Naive thymus-derived CD4-positive, alpha-beta T cell (primary cell): ENCODE measurements at regions of chr2 and their contacts with region 1.

Region 1: DNA sequence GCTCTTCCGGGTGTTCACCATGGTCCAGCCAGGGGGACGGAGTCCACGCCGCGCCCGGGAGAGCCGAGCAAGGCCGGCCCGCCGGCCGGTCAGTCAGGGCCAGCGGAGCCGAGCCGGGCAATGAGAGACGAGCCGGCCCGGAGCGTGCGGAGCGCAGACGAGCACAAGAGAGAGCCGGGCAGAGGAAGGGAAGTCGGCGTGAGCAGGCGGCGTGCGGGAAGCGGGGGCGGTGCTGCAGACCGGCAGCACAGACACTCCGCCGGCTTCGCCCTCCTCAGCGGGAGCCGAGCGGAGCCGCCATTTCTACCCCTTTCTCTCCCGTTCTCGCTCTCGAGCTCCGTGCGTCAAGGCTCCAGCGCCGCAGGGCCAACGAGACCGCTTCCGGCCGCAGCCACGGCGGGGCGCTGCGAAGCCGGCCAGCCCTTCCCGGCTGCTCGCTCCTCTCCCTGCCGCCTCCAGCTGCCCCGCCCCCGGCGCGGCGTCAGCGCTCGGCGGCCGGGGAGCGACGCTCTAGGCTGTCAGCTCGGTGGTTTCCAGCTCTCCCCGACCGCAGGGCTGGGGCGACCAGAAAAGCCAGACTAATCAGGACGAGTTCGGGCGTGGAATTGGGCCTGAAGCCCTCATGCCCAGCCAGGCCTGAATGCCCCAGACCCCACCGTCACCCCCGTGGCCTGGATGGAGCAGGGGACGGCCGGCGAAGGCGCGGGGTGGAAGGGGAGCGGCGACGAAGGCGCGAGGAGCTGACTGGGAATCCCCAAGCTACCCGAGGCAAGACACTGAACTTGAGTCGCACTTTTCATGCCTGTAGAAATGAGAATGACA is at the start of gene ATAD2B:
- DNase-seq: peak; percentile 90 to 97 (median 95)
- ATAC-seq: peak; percentile 90
- H3K4me3 ChIP-seq: peak within 1 kb of the TSS; percentile 94
- H3K4me3 Mint-ChIP-seq: peak within 1 kb of the TSS; percentile 95 to 99 (median 98)
- H3K27ac ChIP-seq: peak within 1 kb of the TSS; percentile 97
- H3K27ac Mint-ChIP-seq: peak within 1 kb of the TSS; percentile 95 to 100 (median 99)
- H3K4me1 ChIP-seq: peaks cover 20 to 31% of the 10 kb centered on the region in 2 donors
- H3K4me1 Mint-ChIP-seq: peaks cover 34 to 57% (median 46%) of the 10 kb centered on the region in 7 donors
- H3K27me3 ChIP-seq: no peaks in the 10 kb centered on the region
- H3K27me3 Mint-ChIP-seq: peaks cover 0 to 4% (median 0%) of the 10 kb centered on the region in 5 donors
- total RNA-seq, gene ATAD2B: 31.8 to 55.8 (median 43.3) TPM

Region 2: DNA sequence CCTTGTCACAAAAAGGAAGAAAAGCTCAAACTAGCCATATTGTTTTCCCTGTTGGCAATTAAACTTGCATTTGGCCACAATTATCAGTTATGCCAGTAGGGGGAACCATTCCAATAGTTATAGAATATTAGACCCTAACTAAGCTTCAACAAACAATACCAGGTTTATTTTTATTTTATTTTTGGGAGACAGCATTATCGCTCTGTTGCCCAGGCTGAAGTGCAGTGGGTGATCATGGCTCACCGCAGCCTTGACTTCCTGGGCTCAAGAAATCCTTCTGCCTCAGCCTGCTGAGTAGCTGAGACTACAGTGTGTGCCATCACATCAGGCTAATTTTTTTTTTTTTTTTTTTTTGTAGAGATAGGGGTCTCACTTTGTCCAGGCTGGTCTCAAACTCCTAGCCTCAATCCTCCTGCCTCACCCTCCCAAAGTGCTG is 102.2 kb before region 1 on chr2:
- CTCF ChIA-PET with region 1: interaction called, 3 read pairs
- POLR2A ChIA-PET with region 1: interaction called, 11 read pairs
- intact Hi-C with region 1: loop called (anchors 1 to 2 kb)
- DNase-seq: peak in 7 of 9 donors; percentile 18 to 60 (median 50)
- ATAC-seq: peak; percentile 77
- H3K4me3 ChIP-seq: no peak overlapping the region
- H3K4me3 Mint-ChIP-seq: no peak overlapping the region
- H3K27ac ChIP-seq: no peak overlapping the region
- H3K27ac Mint-ChIP-seq: no peak overlapping the region
- H3K4me1 ChIP-seq: no peaks in the 10 kb centered on the region
- H3K4me1 Mint-ChIP-seq: peaks cover 0 to 4% (median 0%) of the 10 kb centered on the region in 7 donors
- H3K27me3 ChIP-seq: no peaks in the 10 kb centered on the region
- H3K27me3 Mint-ChIP-seq: no peaks in the 10 kb centered on the region

Region 3: GRCh38 chr2:23916727-23917405 is 10.1 kb before region 1 on chr2:
- CTCF ChIA-PET with region 1: no interaction called
- POLR2A ChIA-PET with region 1: interaction called, 4 read pairs
- intact Hi-C with region 1: loop called (anchors 1 kb)
- DNase-seq: peak in 6 of 9 donors; percentile 8 to 24 (median 17)
- ATAC-seq: peak; percentile 61
- H3K4me3 ChIP-seq: no peak overlapping the region
- H3K4me3 Mint-ChIP-seq: peak overlapping the region in 9 of 10 donors; percentile 8 to 69 (median 38)
- H3K27ac ChIP-seq: peak overlapping the region; percentile 20
- H3K27ac Mint-ChIP-seq: peak overlapping the region in 7 of 9 donors; percentile 0 to 61 (median 48)
- H3K4me1 ChIP-seq: peaks cover 12 to 16% of the 10 kb centered on the region in 2 donors
- H3K4me1 Mint-ChIP-seq: peaks cover 42 to 84% (median 68%) of the 10 kb centered on the region in 7 donors
- H3K27me3 ChIP-seq: no peaks in the 10 kb centered on the region
- H3K27me3 Mint-ChIP-seq: no peaks in the 10 kb centered on the region

Region 4: GRCh38 chr2:23988371-23988770 is 61.4 kb after region 1 on chr2:
- CTCF ChIA-PET with region 1: interaction called, 3 read pairs
- POLR2A ChIA-PET with region 1: interaction called, 4 read pairs
- intact Hi-C with region 1: loop called in 1 of 2 experiments (anchors 2 kb)
- DNase-seq: peak in 4 of 9 donors; percentile 8 to 26 (median 23)
- ATAC-seq: peak; percentile 60
- H3K4me3 ChIP-seq: no peak overlapping the region
- H3K4me3 Mint-ChIP-seq: no peak overlapping the region
- H3K27ac ChIP-seq: no peak overlapping the region
- H3K27ac Mint-ChIP-seq: peak overlapping the region in 1 of 9 donors; percentile 49
- H3K4me1 ChIP-seq: no peaks in the 10 kb centered on the region
- H3K4me1 Mint-ChIP-seq: peaks cover 0 to 3% (median 0%) of the 10 kb centered on the region in 7 donors
- H3K27me3 ChIP-seq: no peaks in the 10 kb centered on the region
- H3K27me3 Mint-ChIP-seq: no peaks in the 10 kb centered on the region

Region 5: DNA sequence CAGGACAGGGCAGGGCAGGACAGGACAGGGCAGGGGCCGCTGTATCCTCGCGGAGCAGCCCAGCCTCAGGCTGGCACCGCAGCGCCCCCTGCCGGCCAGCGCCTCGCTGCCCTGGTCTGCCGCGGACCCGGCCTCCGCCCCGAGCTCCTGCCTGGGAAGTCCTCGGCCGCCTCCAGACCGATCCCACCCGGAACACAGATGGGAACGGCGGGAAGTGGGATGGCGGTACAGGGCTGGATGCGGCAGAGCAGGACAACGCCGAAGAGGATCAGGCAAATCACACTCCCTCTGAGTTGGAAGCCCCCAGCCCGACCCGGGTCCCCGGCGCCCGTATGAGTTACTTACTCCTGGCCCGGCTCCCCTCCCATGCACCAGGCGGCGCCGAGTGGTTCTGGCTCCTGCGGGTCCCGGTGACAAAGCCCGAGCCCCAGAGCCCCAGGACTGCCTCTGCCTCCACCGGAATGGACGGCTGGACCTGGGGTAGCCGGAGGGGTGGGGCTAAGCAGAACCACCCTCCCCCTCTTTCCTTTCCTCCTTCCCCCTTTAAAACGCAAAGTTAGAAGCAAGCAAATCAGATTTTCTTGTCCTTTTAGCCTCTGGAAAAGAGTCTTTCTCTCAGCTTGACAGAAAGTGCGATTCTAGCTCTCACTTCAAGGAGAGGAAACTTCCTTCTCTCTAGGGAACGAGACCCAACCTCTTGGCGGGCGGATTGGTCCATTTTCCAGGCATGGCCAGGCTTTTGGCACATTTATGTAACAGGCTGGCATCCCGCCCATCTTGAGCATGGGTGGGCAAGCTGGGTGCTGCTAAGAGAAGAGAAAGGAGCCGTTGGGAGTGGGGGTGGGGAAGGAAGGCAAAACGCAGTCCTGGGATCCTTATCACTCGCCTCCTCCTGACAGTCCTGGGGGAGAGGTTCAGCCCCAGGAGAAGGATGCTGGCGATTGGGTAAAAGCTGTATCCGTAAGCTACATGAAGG is 157.7 kb after region 1 on chr2 and contains the start of gene TP53I3:
- CTCF ChIA-PET with region 1: interaction called, 7 read pairs
- POLR2A ChIA-PET with region 1: interaction called, 9 read pairs
- intact Hi-C with region 1: loop called (anchors 1 to 2 kb)
- DNase-seq: peak; percentile 59 to 93 (median 80)
- ATAC-seq: peak; percentile 96
- H3K4me3 ChIP-seq: peak within 1 kb of the TSS; percentile 61
- H3K4me3 Mint-ChIP-seq: peak within 1 kb of the TSS; percentile 81 to 93 (median 88)
- H3K27ac ChIP-seq: peak within 1 kb of the TSS; percentile 28
- H3K27ac Mint-ChIP-seq: peak within 1 kb of the TSS in 8 of 9 donors; percentile 49 to 83 (median 65)
- H3K4me1 ChIP-seq: peaks cover 5 to 8% of the 10 kb centered on the region in 2 donors
- H3K4me1 Mint-ChIP-seq: peaks cover 10 to 21% (median 17%) of the 10 kb centered on the region in 7 donors
- H3K27me3 ChIP-seq: no peaks in the 10 kb centered on the region
- H3K27me3 Mint-ChIP-seq: no peaks in the 10 kb centered on the region
- total RNA-seq, gene TP53I3: 0.49 to 5.0 (median 1.7) TPM

Region 6: DNA sequence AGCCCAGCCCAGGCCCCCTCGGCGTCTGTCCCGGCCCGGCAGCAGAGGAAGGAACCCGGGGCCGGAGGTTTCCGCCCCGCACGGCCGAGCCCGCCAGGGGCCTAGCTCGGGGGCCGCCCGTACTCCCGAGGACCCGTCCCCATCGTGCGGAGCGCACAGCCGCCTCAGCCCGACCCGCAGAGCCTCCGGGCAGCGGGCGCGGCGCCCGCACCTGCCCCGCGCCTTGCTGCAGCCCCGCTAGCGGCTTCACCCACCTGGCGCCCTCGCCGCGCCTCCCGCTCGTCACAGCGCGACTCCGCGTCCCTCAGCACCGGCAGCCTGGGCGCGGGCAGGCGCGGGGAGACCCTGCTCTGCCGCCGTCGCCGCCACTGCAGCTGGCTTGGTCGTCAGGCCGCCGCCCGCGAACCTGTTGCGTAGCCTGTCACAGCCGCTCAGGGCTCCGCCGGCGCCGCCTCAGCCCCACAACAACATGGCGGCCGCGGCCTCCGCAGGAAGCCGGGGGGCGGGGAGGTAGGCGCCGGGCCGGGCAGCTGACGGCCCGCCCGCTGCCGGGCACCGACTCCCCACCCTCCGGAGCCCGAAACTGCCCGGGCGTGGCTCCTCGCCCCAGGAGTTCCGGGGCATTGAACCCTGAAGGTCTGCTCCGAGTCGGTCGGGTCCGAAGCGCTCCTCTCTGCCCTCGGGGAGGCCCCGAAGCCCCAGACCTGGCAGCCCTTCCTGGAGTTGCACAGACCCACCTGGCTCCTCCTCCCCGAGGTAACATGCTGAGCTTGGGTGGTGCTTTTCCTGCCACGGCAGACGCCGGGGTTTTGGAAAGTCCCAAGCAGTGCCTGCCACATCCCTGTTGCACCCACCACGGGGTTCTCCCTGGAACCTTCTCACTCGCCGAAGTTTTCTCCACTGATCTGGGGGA is 433.3 kb after region 1 on chr2 and contains the start of gene ITSN2:
- CTCF ChIA-PET with region 1: no interaction called
- POLR2A ChIA-PET with region 1: no interaction called
- intact Hi-C with region 1: loop called in 1 of 2 experiments (anchors 2 kb)
- DNase-seq: peak; percentile 76 to 88 (median 83)
- ATAC-seq: peak; percentile 92
- H3K4me3 ChIP-seq: peak within 1 kb of the TSS; percentile 77
- H3K4me3 Mint-ChIP-seq: peak within 1 kb of the TSS; percentile 88 to 98 (median 92)
- H3K27ac ChIP-seq: peak within 1 kb of the TSS; percentile 99
- H3K27ac Mint-ChIP-seq: peak within 1 kb of the TSS; percentile 91 to 97 (median 95)
- H3K4me1 ChIP-seq: peaks cover 1 to 16% of the 10 kb centered on the region in 2 donors
- H3K4me1 Mint-ChIP-seq: peaks cover 22 to 44% (median 31%) of the 10 kb centered on the region in 7 donors
- H3K27me3 ChIP-seq: no peaks in the 10 kb centered on the region
- H3K27me3 Mint-ChIP-seq: peaks cover 0 to 3% (median 0%) of the 10 kb centered on the region in 5 donors
- total RNA-seq, gene ITSN2: 79.2 to 133 (median 106) TPM